BJ (cell line): ENCODE measurements at regions of chr10 and their contacts with region 1.

Region 1: DNA sequence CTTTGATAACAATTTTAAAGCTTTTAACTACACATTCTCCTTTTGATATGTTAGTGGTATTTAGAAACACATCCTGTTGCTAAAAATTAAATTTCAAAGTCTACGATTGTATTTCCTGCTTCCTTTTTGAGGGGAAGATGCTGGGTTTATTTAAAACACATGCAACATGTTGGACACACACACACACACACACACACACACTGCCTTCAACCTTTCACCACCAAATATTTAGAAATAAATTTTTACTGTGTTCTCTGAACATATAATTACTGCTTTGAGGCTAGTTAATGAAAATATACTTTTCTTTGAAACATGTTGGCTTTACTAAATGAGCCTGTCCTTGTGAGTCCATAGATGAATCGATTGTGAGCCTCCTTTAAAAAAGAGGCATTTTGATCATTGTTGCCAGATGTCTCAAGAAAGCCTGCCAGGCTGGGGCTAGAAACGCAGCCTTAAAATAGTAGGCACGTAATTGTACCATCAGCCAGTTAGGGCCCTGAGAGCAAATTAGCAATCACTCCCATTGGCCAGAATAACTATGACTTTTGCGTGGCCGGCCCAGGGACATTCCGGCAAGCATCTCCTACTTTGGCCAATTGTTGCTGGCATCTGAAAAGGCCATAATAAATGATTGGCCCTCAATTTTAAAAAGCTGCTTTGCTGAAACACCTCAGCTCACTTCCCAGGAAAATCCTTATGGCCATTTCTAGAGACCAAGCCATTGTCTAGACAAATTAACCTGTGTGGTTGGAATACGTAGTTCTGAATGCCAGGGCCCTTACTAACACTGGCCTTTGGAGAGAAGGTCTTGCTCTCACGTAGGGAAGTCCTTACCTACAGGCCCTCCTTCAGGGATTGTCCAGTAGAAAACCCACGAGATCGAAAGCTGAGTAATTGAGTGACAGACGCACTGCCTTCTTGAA is 9.9 kb upstream of the TEX36 start:
- DNase-seq: peak; percentile 68
- H3K4me3 ChIP-seq: no peak overlapping the region
- H3K27me3 ChIP-seq: no peaks in the 10 kb centered on the region
- CTCF ChIP-seq: no peak

Region 2: GRCh38 chr10:124971276-124971675 is 721.6 kb before region 1 on chr10:
- CTCF ChIA-PET with region 1: no interaction called
- POLR2A ChIA-PET with region 1: interaction called, 12 read pairs
- DNase-seq: no peak
- H3K4me3 ChIP-seq: no peak overlapping the region
- H3K27me3 ChIP-seq: no peaks in the 10 kb centered on the region
- CTCF ChIP-seq: no peak